Naive thymus-derived CD4-positive, alpha-beta T cell (primary cell): ENCODE measurements at regions of chr19 and their contacts with region 1.

Region 1: GRCh38 chr19:46860125-46860845 is 512 bp upstream of the ARHGAP35 start:
- DNase-seq: peak; percentile 84 to 95 (median 94)
- ATAC-seq: peak; percentile 91
- H3K4me3 ChIP-seq: peak overlapping the region; percentile 92
- H3K4me3 Mint-ChIP-seq: peak overlapping the region in 9 of 10 donors; percentile 70 to 97 (median 92)
- H3K27ac ChIP-seq: peak overlapping the region; percentile 94
- H3K27ac Mint-ChIP-seq: peak overlapping the region; percentile 68 to 98 (median 92)
- H3K4me1 ChIP-seq: peaks cover 24 to 30% of the 10 kb centered on the region in 2 donors
- H3K4me1 Mint-ChIP-seq: peaks cover 13 to 25% (median 19%) of the 10 kb centered on the region in 7 donors
- H3K27me3 ChIP-seq: no peaks in the 10 kb centered on the region
- H3K27me3 Mint-ChIP-seq: no peaks in the 10 kb centered on the region

Region 2: GRCh38 chr19:45515081-45515624 is 1345.1 kb before region 1 on chr19:
- CTCF ChIA-PET with region 1: no interaction called
- POLR2A ChIA-PET with region 1: no interaction called
- intact Hi-C with region 1: no loop called
- DNase-seq: no peak
- ATAC-seq: peak; percentile 88
- H3K4me3 ChIP-seq: peak overlapping the region; percentile 34
- H3K4me3 Mint-ChIP-seq: peak overlapping the region in 8 of 10 donors; percentile 41 to 70 (median 60)
- H3K27ac ChIP-seq: peak overlapping the region; percentile 59
- H3K27ac Mint-ChIP-seq: peak overlapping the region; percentile 69 to 89 (median 87)
- H3K4me1 ChIP-seq: peaks cover 24 to 40% of the 10 kb centered on the region in 2 donors
- H3K4me1 Mint-ChIP-seq: peaks cover 32 to 63% (median 54%) of the 10 kb centered on the region in 7 donors
- H3K27me3 ChIP-seq: no peaks in the 10 kb centered on the region
- H3K27me3 Mint-ChIP-seq: no peaks in the 10 kb centered on the region

Region 3: DNA sequence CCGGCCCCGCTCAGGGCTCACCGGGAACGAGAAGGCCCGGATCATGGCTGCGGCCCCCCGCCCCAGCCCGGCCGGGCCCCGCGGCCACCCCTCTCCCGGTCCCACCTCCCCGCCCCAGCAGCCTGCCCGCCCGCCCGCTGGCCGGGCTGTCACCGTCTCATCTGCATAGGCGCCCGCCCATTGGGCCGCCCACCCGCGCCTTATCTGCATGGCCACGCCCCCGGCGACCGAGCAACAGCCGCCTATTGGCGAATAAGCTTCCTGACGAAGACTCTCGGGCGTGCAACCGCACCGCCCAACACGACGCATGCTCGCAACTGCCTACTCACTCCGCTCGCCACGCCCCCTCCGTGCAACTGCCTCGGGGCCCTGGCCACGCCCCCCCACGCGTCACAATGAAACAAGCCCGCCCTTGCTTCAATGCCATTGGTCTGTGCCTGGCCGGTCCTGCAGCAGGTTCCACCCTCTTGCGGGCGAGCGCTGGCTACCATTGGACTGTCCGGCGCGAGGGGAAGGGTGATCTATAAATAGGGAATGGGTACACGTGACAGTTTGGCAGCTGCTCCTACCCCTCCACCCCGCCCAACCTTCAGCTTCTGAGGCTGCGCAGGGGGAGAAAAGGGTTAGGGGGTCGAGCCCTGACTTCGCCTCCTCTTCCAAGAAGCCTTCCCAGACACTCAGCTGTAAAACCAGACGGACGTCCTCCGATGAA is 199.1 kb before region 1 on chr19 and contains the start of gene DACT3:
- CTCF ChIA-PET with region 1: no interaction called
- POLR2A ChIA-PET with region 1: no interaction called
- intact Hi-C with region 1: loop called in 1 of 2 experiments (anchors 1 kb)
- DNase-seq: peak; percentile 98 to 100 (median 99)
- ATAC-seq: peak; percentile 92
- H3K4me3 ChIP-seq: peak within 1 kb of the TSS; percentile 71
- H3K4me3 Mint-ChIP-seq: peak within 1 kb of the TSS; percentile 80 to 93 (median 86)
- H3K27ac ChIP-seq: peak within 1 kb of the TSS; percentile 65
- H3K27ac Mint-ChIP-seq: peak within 1 kb of the TSS; percentile 76 to 96 (median 91)
- H3K4me1 ChIP-seq: peaks cover 14 to 20% of the 10 kb centered on the region in 2 donors
- H3K4me1 Mint-ChIP-seq: peaks cover 7 to 26% (median 20%) of the 10 kb centered on the region in 7 donors
- H3K27me3 ChIP-seq: peaks cover 6 to 10% of the 10 kb centered on the region in 2 donors
- H3K27me3 Mint-ChIP-seq: peaks cover 9 to 42% (median 18%) of the 10 kb centered on the region in 5 donors
- total RNA-seq, gene DACT3: 0.11 to 1.3 (median 0.34) TPM in 4 of 5 experiments, not detected in the other

Region 4: DNA sequence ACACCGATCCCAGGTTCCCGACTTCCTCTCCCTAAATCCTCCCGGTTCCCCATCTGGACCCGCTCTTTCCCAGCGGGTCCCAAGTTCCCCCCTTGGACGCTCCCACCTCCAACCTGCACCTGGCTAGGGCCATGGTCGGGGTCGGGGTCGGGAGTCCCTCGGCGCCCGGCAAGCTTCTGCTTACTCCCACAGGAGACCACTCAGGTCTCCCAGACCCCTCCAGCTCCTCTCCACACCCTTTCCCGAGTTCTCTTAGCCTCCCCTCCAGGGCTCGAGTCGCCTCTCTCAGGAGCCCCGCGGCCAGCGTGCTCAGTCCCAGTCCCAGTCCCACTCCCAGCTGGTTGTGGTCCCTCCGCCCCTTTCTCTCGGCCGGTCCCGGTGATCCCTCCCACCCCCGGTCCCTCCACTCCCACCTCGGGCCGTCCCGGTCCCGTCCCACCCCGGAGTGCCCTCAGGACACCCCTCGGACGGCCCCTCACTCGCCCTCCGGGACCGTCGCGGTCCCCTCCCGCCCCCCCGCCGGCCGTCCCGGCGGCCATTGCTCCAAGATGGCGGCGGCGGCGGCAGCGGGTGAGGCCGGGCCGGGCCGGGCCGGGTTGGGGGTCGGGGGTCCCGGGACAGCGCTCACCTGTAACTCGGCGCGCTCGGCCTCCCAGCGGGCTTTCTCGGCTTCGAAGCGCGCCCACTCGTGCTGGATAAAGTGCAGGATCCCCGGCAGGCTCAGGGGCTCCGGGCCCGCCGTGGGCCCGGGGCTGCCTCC is 114.6 kb before region 1 on chr19 and contains the start of gene FKRP:
- CTCF ChIA-PET with region 1: no interaction called
- POLR2A ChIA-PET with region 1: no interaction called
- intact Hi-C with region 1: no loop called
- DNase-seq: peak in 6 of 9 donors; percentile 22 to 61 (median 33)
- ATAC-seq: peak; percentile 65
- H3K4me3 ChIP-seq: peak within 1 kb of the TSS; percentile 73
- H3K4me3 Mint-ChIP-seq: peak within 1 kb of the TSS; percentile 84 to 97 (median 90)
- H3K27ac ChIP-seq: peak within 1 kb of the TSS; percentile 91
- H3K27ac Mint-ChIP-seq: peak within 1 kb of the TSS; percentile 74 to 94 (median 87)
- H3K4me1 ChIP-seq: peaks cover 21 to 26% of the 10 kb centered on the region in 2 donors
- H3K4me1 Mint-ChIP-seq: peaks cover 46 to 72% (median 58%) of the 10 kb centered on the region in 7 donors
- H3K27me3 ChIP-seq: no peaks in the 10 kb centered on the region
- H3K27me3 Mint-ChIP-seq: no peaks in the 10 kb centered on the region
- total RNA-seq, gene FKRP: 17.5 to 29.8 (median 21.2) TPM

Region 5: DNA sequence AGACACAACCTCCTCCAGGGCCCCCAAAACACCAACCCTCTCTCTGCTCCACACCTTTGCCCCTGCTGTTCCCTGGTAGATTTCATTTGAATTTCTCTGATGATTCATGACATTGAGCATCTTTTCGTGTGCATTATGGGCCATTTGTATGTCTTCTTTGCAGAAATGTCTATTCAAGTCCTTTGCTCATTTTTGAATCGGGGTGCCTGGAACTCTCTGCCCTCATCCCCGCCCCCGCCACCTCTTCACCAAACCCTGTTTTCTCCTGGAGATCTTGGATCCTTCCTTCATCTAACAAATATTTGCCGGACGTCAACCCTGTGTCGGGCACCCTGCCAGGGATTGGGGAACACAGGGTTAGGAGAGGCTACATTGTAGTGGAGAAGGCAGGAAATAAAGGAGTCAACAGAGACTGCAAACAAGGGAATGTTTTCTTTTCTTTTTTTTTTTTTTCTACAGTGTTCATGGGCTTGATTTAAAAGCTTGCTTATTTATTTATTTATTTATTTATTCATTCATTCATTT is 46.4 kb before region 1 on chr19:
- CTCF ChIA-PET with region 1: no interaction called
- POLR2A ChIA-PET with region 1: no interaction called
- intact Hi-C with region 1: no loop called
- DNase-seq: no peak
- ATAC-seq: no peak
- H3K4me3 ChIP-seq: no peak overlapping the region
- H3K4me3 Mint-ChIP-seq: no peak overlapping the region
- H3K27ac ChIP-seq: no peak overlapping the region
- H3K27ac Mint-ChIP-seq: no peak overlapping the region
- H3K4me1 ChIP-seq: no peaks in the 10 kb centered on the region
- H3K4me1 Mint-ChIP-seq: peaks cover 0 to 2% (median 0%) of the 10 kb centered on the region in 7 donors
- H3K27me3 ChIP-seq: no peaks in the 10 kb centered on the region
- H3K27me3 Mint-ChIP-seq: peaks cover 0 to 2% (median 0%) of the 10 kb centered on the region in 5 donors

Region 6: DNA sequence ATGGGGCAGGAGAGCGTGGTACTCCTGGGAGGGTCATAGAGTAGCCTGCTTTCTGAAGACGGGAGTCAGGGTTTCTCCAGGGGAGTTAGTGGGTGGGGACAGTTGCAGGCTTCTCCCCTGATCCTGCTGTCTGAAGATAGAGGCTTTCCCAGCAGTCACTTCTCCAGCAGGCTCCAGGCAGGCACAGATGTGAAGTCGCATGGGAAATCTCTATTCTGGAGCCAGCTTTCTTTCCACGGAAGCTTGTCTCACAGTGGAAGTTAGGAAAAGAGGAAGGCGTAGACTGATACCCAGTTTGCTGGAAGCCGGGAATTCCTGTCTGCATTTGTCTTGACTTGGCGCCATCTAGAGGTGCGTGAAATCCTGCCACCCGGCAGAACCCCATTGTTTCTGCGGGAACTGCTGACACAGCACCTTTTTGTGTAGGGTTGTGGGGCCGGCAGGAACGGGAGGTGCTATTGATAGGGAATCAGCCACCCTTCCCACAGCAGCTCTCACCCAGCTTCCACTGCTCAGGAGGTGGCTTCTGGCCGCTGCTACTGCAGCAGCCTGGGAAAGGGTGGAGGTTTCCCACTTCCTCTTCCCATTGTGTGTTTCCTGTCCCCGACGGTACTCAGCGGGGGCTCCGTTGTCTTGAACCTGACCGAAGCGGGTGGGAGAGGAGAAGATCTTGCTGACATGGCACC is 130.8 kb after region 1 on chr19:
- CTCF ChIA-PET with region 1: interaction called, 13 read pairs
- POLR2A ChIA-PET with region 1: no interaction called
- intact Hi-C with region 1: loop called (anchors 1 kb)
- DNase-seq: peak in 8 of 9 donors; percentile 21 to 63 (median 31)
- ATAC-seq: peak; percentile 66
- H3K4me3 ChIP-seq: no peak overlapping the region
- H3K4me3 Mint-ChIP-seq: peak overlapping the region in 1 of 10 donors; percentile 19
- H3K27ac ChIP-seq: no peak overlapping the region
- H3K27ac Mint-ChIP-seq: peak overlapping the region in 2 of 9 donors; percentile 28 to 49
- H3K4me1 ChIP-seq: peaks cover 3 to 9% of the 10 kb centered on the region in 2 donors
- H3K4me1 Mint-ChIP-seq: peaks cover 5 to 15% (median 11%) of the 10 kb centered on the region in 7 donors
- H3K27me3 ChIP-seq: no peaks in the 10 kb centered on the region
- H3K27me3 Mint-ChIP-seq: no peaks in the 10 kb centered on the region

Region 7: GRCh38 chr19:47047763-47048405 is 187.6 kb after region 1 on chr19:
- CTCF ChIA-PET with region 1: no interaction called
- POLR2A ChIA-PET with region 1: no interaction called
- intact Hi-C with region 1: loop called (anchors 1 kb)
- DNase-seq: peak; percentile 41 to 80 (median 58)
- ATAC-seq: peak; percentile 57
- H3K4me3 ChIP-seq: peak overlapping the region; percentile 86
- H3K4me3 Mint-ChIP-seq: peak overlapping the region; percentile 89 to 100 (median 97)
- H3K27ac ChIP-seq: peak overlapping the region; percentile 79
- H3K27ac Mint-ChIP-seq: peak overlapping the region; percentile 82 to 96 (median 93)
- H3K4me1 ChIP-seq: peaks cover 6 to 7% of the 10 kb centered on the region in 2 donors
- H3K4me1 Mint-ChIP-seq: peaks cover 10 to 22% (median 16%) of the 10 kb centered on the region in 7 donors
- H3K27me3 ChIP-seq: no peaks in the 10 kb centered on the region
- H3K27me3 Mint-ChIP-seq: peaks cover 0 to 2% (median 0%) of the 10 kb centered on the region in 5 donors

Region 8: GRCh38 chr19:47256688-47257443 is 396.6 kb after region 1 on chr19:
- CTCF ChIA-PET with region 1: no interaction called
- POLR2A ChIA-PET with region 1: no interaction called
- intact Hi-C with region 1: loop called (anchors 1 to 5 kb)
- DNase-seq: peak; percentile 94 to 100 (median 96)
- ATAC-seq: peak; percentile 88
- H3K4me3 ChIP-seq: peak overlapping the region; percentile 65
- H3K4me3 Mint-ChIP-seq: peak overlapping the region; percentile 85 to 97 (median 90)
- H3K27ac ChIP-seq: peak overlapping the region; percentile 90
- H3K27ac Mint-ChIP-seq: peak overlapping the region; percentile 90 to 99 (median 97)
- H3K4me1 ChIP-seq: peaks cover 15 to 24% of the 10 kb centered on the region in 2 donors
- H3K4me1 Mint-ChIP-seq: peaks cover 35 to 46% (median 39%) of the 10 kb centered on the region in 7 donors
- H3K27me3 ChIP-seq: no peaks in the 10 kb centered on the region
- H3K27me3 Mint-ChIP-seq: peaks cover 0 to 2% (median 0%) of the 10 kb centered on the region in 5 donors